Tibial artery (tissue), 4 donors: ENCODE measurements at regions of chr1 and their contacts with region 1.

Region 1: GRCh38 chr1:182962554-182963115 is 9.7 kb upstream of the SHCBP1L start:
- DNase-seq: peak; percentile 83 to 88
- H3K4me3 ChIP-seq: peak overlapping the region; percentile 11 to 31
- H3K27ac ChIP-seq: peak overlapping the region; percentile 35 to 56
- H3K4me1 ChIP-seq: no peaks in the 10 kb centered on the region
- H3K27me3 ChIP-seq: no peaks in the 10 kb centered on the region
- CTCF ChIP-seq: peak; percentile 95

Region 2: DNA sequence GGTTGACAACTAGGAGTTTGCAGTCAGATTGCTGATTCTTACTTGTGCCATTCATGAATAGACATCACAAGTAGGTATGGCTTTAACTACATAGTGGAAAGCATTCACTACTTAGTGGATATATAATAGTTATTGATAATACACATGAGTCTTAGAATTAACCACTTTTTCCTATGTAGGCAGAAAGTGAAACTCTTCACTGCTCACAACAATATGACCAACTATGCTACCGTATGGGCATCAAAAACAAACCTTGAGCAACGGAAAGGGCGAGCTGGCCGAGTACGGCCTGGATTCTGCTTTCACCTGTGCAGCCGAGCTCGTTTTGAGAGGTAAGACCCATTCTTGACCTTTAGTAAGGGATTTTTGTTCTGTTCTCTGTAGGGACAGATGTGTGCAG is 84.8 kb before region 1 on chr1:
- intact Hi-C with region 1: no loop called
- DNase-seq: no peak
- H3K4me3 ChIP-seq: no peak overlapping the region
- H3K27ac ChIP-seq: no peak overlapping the region
- H3K4me1 ChIP-seq: no peaks in the 10 kb centered on the region
- H3K27me3 ChIP-seq: no peaks in the 10 kb centered on the region
- CTCF ChIP-seq: no peak

Region 3: GRCh38 chr1:182889997-182890396 is 72.6 kb before region 1 on chr1:
- intact Hi-C with region 1: no loop called
- DNase-seq: no peak
- H3K4me3 ChIP-seq: no peak overlapping the region
- H3K27ac ChIP-seq: no peak overlapping the region
- H3K4me1 ChIP-seq: no peaks in the 10 kb centered on the region
- H3K27me3 ChIP-seq: no peaks in the 10 kb centered on the region
- CTCF ChIP-seq: no peak

Region 4: GRCh38 chr1:183023601-183024316 is 61.1 kb after region 1 on chr1:
- intact Hi-C with region 1: loop called (anchors 10 kb)
- DNase-seq: peak; percentile 57 to 78
- H3K4me3 ChIP-seq: peak overlapping the region; percentile 77 to 86
- H3K27ac ChIP-seq: peak overlapping the region; percentile 97 to 99
- H3K4me1 ChIP-seq: peaks cover 0 to 50% (median 28%) of the 10 kb centered on the region in 4 donors
- H3K27me3 ChIP-seq: no peaks in the 10 kb centered on the region
- CTCF ChIP-seq: peak; percentile 39 to 42

Region 5: GRCh38 chr1:183101841-183102276 is 139.2 kb after region 1 on chr1:
- intact Hi-C with region 1: loop called (anchors 10 kb)
- DNase-seq: no peak
- H3K4me3 ChIP-seq: no peak overlapping the region
- H3K27ac ChIP-seq: no peak overlapping the region
- H3K4me1 ChIP-seq: peaks cover 0 to 89% (median 36%) of the 10 kb centered on the region in 4 donors
- H3K27me3 ChIP-seq: no peaks in the 10 kb centered on the region
- CTCF ChIP-seq: no peak

Region 6: GRCh38 chr1:183281553-183282091 is 319.0 kb after region 1 on chr1:
- intact Hi-C with region 1: loop called (anchors 10 kb)
- DNase-seq: peak; percentile 95 to 97
- H3K4me3 ChIP-seq: peak overlapping the region in 1 of 2 donors; percentile 21
- H3K27ac ChIP-seq: peak overlapping the region; percentile 68 to 85
- H3K4me1 ChIP-seq: peaks cover 0 to 49% (median 32%) of the 10 kb centered on the region in 4 donors
- H3K27me3 ChIP-seq: no peaks in the 10 kb centered on the region
- CTCF ChIP-seq: peak; percentile 86 to 98

Region 7: GRCh38 chr1:183327434-183328290 is 365.0 kb after region 1 on chr1:
- intact Hi-C with region 1: loop called (anchors 5 kb)
- DNase-seq: peak; percentile 45 to 76
- H3K4me3 ChIP-seq: no peak overlapping the region
- H3K27ac ChIP-seq: peak overlapping the region; percentile 70 to 79
- H3K4me1 ChIP-seq: peaks cover 0 to 32% (median 17%) of the 10 kb centered on the region in 4 donors
- H3K27me3 ChIP-seq: no peaks in the 10 kb centered on the region
- CTCF ChIP-seq: no peak